ENCODE measurements at regions of chr2 and their contacts with region 1.

Region 1: GRCh38 chr2:165953655-165954606 is at the start of gene TTC21B:
- DNase-seq: peak; percentile 84 to 98 (median 97)

Region 2: DNA sequence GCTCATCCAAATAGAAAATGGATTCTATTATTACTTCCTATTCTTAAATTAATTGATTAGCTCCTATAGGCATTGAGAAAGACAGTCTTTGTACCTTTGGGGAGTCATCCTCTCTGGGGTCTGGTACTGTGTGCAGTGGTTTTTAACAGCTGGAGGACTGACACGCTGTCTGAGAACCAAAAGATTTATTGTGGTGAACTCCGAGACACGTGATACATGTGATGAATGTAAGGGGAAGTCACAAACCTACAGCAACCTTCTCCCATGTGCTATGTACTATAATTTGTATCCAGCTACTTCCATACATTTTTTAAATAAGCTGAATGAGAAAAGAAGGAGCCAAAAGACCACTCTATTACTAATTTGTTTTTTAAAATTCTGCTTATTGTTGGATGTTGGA is 293.6 kb before region 1 on chr2:
- intact Hi-C with region 1: no loop called
- DNase-seq: no peak

Region 3: GRCh38 chr2:165815299-165816141 is 138.4 kb before region 1 on chr2:
- intact Hi-C with region 1: no loop called
- DNase-seq: no peak

Region 4: GRCh38 chr2:165889158-165889557 is 64.8 kb before region 1 on chr2:
- intact Hi-C with region 1: loop called (anchors 5 kb)
- DNase-seq: no peak

Region 5: DNA sequence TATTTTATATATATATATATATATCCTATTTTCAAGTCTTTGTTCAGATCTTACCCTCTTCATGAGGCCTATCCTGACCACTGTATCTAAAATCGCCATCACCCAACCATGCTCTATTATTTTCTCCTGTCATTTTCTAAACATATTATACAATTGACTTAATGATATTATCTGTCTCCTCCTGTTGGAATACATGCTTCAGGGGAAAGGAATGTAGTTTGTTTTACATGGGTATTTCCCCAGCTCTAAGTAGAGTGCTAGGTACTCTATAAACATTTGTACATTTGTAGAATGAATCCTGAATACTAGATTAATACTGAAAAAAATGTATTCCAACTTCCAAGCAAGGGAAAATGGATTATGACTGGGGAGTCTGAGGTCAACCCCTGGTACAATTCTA is 26.6 kb before region 1 on chr2:
- intact Hi-C with region 1: no loop called
- DNase-seq: no peak

Measured in head of caudate nucleus (tissue), 42 donors.